Calu3 (cell line): ENCODE measurements at regions of chr10 and their contacts with region 1.

Region 1: DNA sequence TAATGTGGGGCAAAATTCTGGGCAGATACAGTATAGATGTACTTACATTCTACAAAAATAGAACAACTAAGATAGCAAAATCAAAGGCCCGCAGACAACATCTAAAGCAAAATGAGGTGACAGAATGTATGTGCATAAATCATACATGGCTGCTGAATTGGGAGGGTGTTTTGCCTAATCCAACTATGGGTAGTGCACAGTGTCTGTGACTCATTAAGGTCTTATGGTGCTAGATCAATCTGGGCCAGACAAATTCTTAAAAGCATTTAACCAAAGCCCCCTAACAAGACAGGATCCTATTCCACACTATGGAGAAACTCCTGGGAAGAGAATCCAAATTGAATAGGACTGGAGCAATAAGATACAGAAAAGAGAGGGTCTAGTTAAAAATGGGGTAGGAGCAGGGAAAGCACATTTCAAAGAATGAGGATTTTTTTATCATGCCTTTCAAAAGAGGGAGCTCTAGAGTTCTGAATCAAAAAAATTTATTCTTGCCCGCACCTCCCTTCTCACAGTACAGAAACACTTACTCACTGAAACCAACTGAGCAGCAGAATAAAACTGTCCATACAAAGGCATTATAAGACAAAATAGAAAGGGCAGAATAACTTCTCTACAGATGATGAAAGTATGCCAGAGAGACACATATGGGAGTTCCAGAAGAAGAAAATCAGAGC is 181.3 kb downstream of the RNLS start:
- DNase-seq: no peak
- H3K4me3 Mint-ChIP-seq: no peak overlapping the region
- H3K27ac Mint-ChIP-seq: no peak overlapping the region
- H3K4me1 Mint-ChIP-seq: peaks cover 18% of the 10 kb centered on the region
- H3K27me3 Mint-ChIP-seq: no peaks in the 10 kb centered on the region
- CTCF ChIP-seq: no peak

Region 2: GRCh38 chr10:88473989-88474883 is 72.4 kb after region 1 on chr10:
- CTCF ChIA-PET with region 1: no interaction called
- intact Hi-C with region 1: loop called (anchors 5 kb)
- DNase-seq: peak; percentile 61
- H3K4me3 Mint-ChIP-seq: no peak overlapping the region
- H3K27ac Mint-ChIP-seq: no peak overlapping the region
- H3K4me1 Mint-ChIP-seq: peaks cover 17% of the 10 kb centered on the region
- H3K27me3 Mint-ChIP-seq: no peaks in the 10 kb centered on the region
- CTCF ChIP-seq: no peak

Region 3: GRCh38 chr10:88810196-88810961 is 408.6 kb after region 1 on chr10:
- CTCF ChIA-PET with region 1: no interaction called
- intact Hi-C with region 1: no loop called
- DNase-seq: peak; percentile 34
- H3K4me3 Mint-ChIP-seq: no peak overlapping the region
- H3K27ac Mint-ChIP-seq: no peak overlapping the region
- H3K4me1 Mint-ChIP-seq: peaks cover 10% of the 10 kb centered on the region
- H3K27me3 Mint-ChIP-seq: no peaks in the 10 kb centered on the region
- CTCF ChIP-seq: peak; percentile 39